Left lung (tissue), 14 donors: ENCODE measurements at regions of chr12 and their contacts with region 1.

Region 1: GRCh38 chr12:12916135-12916944 is 25.0 kb downstream of the GPRC5A start:
- DNase-seq: peak; percentile 76 to 91 (median 86)
- ATAC-seq: peak; percentile 83
- H3K4me3 ChIP-seq: no peak overlapping the region
- H3K27ac ChIP-seq: peak overlapping the region; percentile 14 to 23
- H3K4me1 ChIP-seq: peaks cover 7 to 11% of the 10 kb centered on the region in 2 donors
- H3K27me3 ChIP-seq: no peaks in the 10 kb centered on the region
- CTCF ChIP-seq: peak; percentile 95 to 98

Region 2: DNA sequence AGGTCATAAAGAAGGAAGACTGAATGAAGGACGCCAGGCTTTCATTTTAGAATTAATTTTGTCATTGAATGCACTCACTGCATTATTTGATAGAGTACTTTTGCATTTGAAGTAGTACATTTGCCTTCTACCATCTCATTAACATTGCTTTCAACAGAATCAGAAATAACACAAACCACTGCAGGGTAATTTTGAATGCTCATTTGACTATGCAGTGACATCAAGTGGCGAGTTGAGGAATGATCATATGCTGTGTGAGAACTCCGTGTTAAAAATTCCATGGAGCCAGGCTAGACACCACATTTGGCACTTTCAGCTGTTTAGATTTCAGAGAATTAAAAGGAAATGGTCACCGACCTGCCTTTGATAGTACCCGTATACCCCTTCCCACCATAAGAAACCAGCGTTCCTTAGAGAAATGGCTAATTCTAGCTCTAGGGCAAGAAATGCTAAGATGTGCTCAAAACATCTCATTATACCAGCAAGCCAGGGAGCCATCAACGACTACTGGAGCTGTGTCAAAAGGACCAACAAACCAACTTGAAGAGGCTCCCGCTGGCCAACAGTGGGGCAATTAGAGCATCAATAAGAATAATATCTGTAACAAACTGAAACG is 67.2 kb after region 1 on chr12:
- intact Hi-C with region 1: loop called in 1 of 2 experiments (anchors 5 kb)
- DNase-seq: no peak
- ATAC-seq: peak; percentile 76
- H3K4me3 ChIP-seq: no peak overlapping the region
- H3K27ac ChIP-seq: no peak overlapping the region
- H3K4me1 ChIP-seq: peaks cover 0 to 16% of the 10 kb centered on the region in 2 donors
- H3K27me3 ChIP-seq: no peaks in the 10 kb centered on the region
- CTCF ChIP-seq: peak in 1 of 2 donors; percentile 44

Region 3: DNA sequence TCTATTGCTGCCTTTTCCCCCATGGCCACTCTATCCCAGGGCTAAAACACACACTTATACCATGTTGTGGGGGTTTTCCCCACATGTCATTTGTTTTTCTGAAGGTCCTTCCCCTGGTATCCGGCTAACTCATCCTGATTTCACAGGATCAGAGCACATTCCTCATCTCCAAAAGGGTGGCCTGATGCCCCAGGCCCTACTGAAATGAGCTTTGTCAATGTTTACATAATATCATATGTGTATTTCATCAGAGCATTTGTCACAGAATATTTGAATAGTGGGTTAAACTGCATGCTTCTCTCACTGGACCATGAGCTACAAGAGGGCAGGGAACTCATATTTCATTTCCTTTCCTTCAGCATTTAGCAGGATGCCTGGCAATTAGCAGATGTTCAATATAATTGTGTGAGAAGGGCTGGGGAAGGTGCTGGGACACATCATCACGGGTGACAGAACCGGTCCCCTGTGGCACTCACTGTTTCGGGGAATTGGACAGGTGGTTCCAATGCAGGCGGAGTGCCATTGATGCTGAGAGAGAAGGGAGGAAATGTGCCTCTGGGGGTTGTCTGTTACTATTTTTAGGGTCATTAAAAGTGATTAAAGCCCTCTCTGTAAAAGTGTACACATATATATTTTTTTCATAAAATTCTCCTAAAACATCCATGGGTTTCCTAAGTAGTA is 307.0 kb after region 1 on chr12:
- intact Hi-C with region 1: loop called in 1 of 2 experiments (anchors 10 kb)
- DNase-seq: no peak
- ATAC-seq: no peak
- H3K4me3 ChIP-seq: no peak overlapping the region
- H3K27ac ChIP-seq: no peak overlapping the region
- H3K4me1 ChIP-seq: peaks cover 4 to 9% of the 10 kb centered on the region in 2 donors
- H3K27me3 ChIP-seq: no peaks in the 10 kb centered on the region
- CTCF ChIP-seq: no peak